Activated CD4-positive, alpha-beta memory T cell treated with anti-CD3 and anti-CD28 coated beads for 36 hours (primary cell): ENCODE measurements at regions of chr7 and their contacts with region 1.

Region 1: GRCh38 chr7:50266635-50267386 is 37.7 kb upstream of the IKZF1 start:
- DNase-seq: peak; percentile 90
- H3K4me3 Mint-ChIP-seq: peak overlapping the region; percentile 64
- H3K27ac Mint-ChIP-seq: peak overlapping the region; percentile 96
- H3K4me1 Mint-ChIP-seq: peaks cover 96% of the 10 kb centered on the region
- H3K27me3 Mint-ChIP-seq: no peaks in the 10 kb centered on the region

Region 2: DNA sequence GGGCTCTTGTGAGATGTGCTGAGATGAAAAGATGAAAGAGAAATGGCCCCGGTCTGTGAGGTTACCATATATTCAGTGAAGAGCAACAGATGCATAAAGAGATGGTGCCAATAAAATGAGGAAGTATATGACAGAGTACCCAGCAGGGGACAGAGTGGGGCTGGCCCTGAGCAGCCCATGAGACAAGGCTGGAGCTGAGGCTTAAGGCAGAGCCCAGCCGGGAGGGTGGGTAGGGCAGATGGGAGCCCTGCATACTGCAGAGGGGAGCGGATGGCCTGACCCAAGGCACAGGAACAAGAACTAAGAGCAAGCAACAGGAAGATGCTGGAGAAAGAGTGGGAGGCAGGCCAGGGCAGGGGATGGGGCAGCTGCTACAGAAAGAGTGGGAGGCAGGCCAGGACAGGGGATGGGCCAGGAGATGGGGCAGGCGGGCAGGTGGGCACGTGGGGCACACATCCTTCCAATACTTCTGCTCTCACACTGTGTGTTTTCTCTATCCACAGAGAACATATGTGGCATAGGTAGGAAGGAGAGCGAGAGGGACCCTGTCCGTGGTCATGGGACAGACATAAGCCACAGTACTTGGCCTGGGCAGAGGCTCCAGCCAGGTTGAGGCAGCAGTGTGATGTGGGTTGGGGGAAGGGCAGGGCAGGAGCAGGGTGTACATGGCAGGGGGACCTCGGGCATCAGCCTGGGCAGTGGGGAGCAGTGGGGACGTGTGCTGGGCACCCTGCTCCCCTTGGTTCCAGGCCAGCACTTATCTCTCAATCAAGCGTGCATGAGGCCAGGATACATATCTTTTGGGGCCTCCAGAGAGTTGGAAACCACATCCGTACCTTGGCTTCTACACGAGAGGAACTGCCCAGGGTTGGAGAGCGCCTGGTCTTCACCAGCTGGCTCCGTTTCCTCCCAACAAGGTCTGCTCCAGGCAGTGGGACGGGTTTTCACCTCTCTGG is 53.9 kb before region 1 on chr7:
- CTCF ChIA-PET with region 1: interaction called, 58 read pairs
- POLR2A ChIA-PET with region 1: interaction called, 17 read pairs
- intact Hi-C with region 1: loop called (anchors 1 kb)
- DNase-seq: peak; percentile 47
- H3K4me3 Mint-ChIP-seq: peak overlapping the region; percentile 28
- H3K27ac Mint-ChIP-seq: peak overlapping the region; percentile 71
- H3K4me1 Mint-ChIP-seq: peaks cover 84% of the 10 kb centered on the region
- H3K27me3 Mint-ChIP-seq: no peaks in the 10 kb centered on the region

Region 3: GRCh38 chr7:50287129-50287528 is 20.3 kb after region 1 on chr7:
- CTCF ChIA-PET with region 1: no interaction called
- POLR2A ChIA-PET with region 1: no interaction called
- intact Hi-C with region 1: loop called (anchors 1 kb)
- DNase-seq: no peak
- H3K4me3 Mint-ChIP-seq: no peak overlapping the region
- H3K27ac Mint-ChIP-seq: no peak overlapping the region
- H3K4me1 Mint-ChIP-seq: peaks cover 36% of the 10 kb centered on the region
- H3K27me3 Mint-ChIP-seq: peaks cover 1% of the 10 kb centered on the region

Region 4: DNA sequence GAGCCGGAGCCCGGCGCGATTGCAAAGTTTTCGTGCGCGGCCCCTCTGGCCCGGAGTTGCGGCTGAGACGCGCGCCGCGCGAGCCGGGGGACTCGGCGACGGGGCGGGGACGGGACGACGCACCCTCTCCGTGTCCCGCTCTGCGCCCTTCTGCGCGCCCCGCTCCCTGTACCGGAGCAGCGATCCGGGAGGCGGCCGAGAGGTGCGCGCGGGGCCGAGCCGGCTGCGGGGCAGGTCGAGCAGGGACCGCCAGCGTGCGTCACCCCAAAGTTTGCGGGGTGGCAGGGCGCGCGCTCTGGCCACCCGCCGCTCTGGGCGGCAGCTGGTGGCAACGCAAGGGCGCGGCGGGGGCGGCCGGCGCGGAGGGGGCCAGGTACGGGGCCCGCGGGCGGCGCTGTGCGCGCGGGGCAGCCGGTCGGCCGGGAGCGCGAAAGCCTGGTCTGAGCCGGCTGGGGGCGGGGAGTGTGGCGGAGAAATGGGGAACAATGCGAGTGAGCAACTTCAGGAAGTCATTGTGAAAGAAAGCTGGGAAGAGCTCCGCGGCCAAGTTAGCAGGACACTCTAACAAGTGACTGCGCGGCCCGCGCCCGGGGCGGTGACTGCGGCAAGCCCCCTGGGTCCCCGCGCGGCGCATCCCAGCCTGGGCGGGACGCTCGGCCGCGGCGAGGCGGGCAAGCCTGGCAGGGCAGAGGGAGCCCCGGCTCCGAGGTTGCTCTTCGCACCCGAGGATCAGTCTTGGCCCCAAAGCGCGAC is 37.5 kb after region 1 on chr7 and contains the start of gene IKZF1:
- CTCF ChIA-PET with region 1: interaction called, 18 read pairs
- POLR2A ChIA-PET with region 1: interaction called, 46 read pairs
- intact Hi-C with region 1: loop called (anchors 1 kb)
- DNase-seq: peak; percentile 76
- H3K4me3 Mint-ChIP-seq: peak within 1 kb of the TSS; percentile 86
- H3K27ac Mint-ChIP-seq: peak within 1 kb of the TSS; percentile 94
- H3K4me1 Mint-ChIP-seq: peaks cover 42% of the 10 kb centered on the region
- H3K27me3 Mint-ChIP-seq: no peaks in the 10 kb centered on the region
- total RNA-seq, gene IKZF1: 207 to 216 TPM

Region 5: GRCh38 chr7:50349963-50350944 is 83.4 kb after region 1 on chr7:
- CTCF ChIA-PET with region 1: no interaction called
- POLR2A ChIA-PET with region 1: interaction called, 15 read pairs
- intact Hi-C with region 1: loop called (anchors 1 kb)
- DNase-seq: peak; percentile 94
- H3K4me3 Mint-ChIP-seq: peak overlapping the region; percentile 14
- H3K27ac Mint-ChIP-seq: peak overlapping the region; percentile 92
- H3K4me1 Mint-ChIP-seq: peaks cover 98% of the 10 kb centered on the region
- H3K27me3 Mint-ChIP-seq: no peaks in the 10 kb centered on the region

Region 6: DNA sequence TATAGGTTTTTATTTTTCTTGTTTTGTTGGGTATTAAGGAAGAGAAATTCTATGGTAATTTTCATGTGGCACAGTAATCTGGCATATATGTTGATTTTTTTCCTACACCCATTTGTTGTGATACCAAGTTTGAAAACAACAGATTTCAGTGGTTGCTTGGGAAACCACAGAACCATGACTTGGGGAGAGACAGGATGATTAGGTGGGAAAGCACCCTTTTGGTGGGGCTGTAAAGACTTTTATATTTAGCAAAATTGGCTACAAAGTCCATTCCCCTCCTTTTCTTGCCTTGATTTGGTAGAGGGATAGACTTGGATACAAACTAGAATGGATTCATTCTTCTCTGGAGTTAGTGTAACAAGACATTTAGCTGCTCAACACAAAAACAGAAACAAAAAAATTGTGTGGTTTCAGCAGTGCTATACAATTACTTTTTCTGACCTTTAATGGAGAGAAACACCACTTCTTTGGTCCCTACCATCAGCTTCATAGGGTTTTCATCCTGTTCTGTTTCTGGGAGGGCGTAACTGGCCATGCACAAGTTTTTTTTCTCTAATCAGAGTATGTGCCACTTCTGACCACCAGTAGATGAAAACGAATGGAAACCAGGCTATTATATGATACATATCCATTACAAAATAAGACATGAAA is 130.6 kb after region 1 on chr7:
- CTCF ChIA-PET with region 1: interaction called, 3 read pairs
- POLR2A ChIA-PET with region 1: no interaction called
- intact Hi-C with region 1: loop called (anchors 1 kb)
- DNase-seq: peak; percentile 50
- H3K4me3 Mint-ChIP-seq: peak overlapping the region; percentile 20
- H3K27ac Mint-ChIP-seq: peak overlapping the region; percentile 84
- H3K4me1 Mint-ChIP-seq: peaks cover 79% of the 10 kb centered on the region
- H3K27me3 Mint-ChIP-seq: no peaks in the 10 kb centered on the region